Activated CD4-positive, alpha-beta memory T cell treated with anti-CD3 and anti-CD28 coated beads for 36 hours (primary cell): ENCODE measurements at regions of chr1 and their contacts with region 1.

Region 1: GRCh38 chr1:43389326-43390313 is at the starts of genes MED8 and SZT2:
- DNase-seq: peak; percentile 96
- H3K4me3 Mint-ChIP-seq: peak within 1 kb of the TSS; percentile 100
- H3K27ac Mint-ChIP-seq: peak within 1 kb of the TSS; percentile 97
- H3K4me1 Mint-ChIP-seq: peaks cover 40% of the 10 kb centered on the region
- H3K27me3 Mint-ChIP-seq: no peaks in the 10 kb centered on the region
- total RNA-seq, gene MED8: 38.9 to 39.4 TPM
- total RNA-seq, gene SZT2: 27.3 to 37.6 TPM

Region 2: DNA sequence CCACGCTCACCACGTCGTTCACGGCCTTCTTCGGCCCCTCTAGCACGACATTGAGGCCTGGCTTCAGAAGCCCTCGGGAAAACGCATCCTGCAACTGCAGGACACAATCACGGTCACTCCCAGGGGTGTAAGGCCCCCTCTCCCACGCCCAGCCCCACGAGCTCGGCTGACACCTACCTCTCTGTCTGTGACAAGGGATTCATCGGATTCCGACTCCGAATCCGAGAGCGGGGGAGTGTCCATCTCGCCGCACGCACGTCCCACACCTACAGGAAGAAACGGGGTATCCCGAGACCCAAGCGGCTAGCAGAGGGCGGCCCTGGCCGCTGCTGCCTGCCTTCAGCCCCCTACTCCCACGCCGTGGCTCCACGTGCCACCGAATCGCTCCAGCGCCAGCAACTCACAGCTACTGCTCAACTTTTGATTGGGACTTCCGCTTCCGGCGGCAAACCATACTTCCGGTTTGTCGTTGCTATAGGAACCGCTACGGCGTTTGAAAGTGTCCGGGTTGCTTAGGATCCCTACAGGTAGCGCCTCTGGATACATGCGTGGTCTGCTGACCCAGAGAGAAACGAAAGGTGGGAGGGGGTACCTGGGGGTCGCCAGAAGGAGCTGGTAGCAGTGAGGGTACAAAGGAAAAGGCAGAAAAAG is 217.6 kb before region 1 on chr1 and contains the starts of genes CFAP57 and EBNA1BP2:
- CTCF ChIA-PET with region 1: no interaction called
- POLR2A ChIA-PET with region 1: no interaction called
- intact Hi-C with region 1: loop called (anchors 1 kb)
- DNase-seq: peak; percentile 96
- H3K4me3 Mint-ChIP-seq: peak within 1 kb of the TSS; percentile 98
- H3K27ac Mint-ChIP-seq: peak within 1 kb of the TSS; percentile 76
- H3K4me1 Mint-ChIP-seq: peaks cover 27% of the 10 kb centered on the region
- H3K27me3 Mint-ChIP-seq: peaks cover 16% of the 10 kb centered on the region
- total RNA-seq, gene CFAP57: 0.43 TPM in 1 of 2 experiments, not detected in the other
- total RNA-seq, gene EBNA1BP2: 97.5 to 104 TPM

Region 3: DNA sequence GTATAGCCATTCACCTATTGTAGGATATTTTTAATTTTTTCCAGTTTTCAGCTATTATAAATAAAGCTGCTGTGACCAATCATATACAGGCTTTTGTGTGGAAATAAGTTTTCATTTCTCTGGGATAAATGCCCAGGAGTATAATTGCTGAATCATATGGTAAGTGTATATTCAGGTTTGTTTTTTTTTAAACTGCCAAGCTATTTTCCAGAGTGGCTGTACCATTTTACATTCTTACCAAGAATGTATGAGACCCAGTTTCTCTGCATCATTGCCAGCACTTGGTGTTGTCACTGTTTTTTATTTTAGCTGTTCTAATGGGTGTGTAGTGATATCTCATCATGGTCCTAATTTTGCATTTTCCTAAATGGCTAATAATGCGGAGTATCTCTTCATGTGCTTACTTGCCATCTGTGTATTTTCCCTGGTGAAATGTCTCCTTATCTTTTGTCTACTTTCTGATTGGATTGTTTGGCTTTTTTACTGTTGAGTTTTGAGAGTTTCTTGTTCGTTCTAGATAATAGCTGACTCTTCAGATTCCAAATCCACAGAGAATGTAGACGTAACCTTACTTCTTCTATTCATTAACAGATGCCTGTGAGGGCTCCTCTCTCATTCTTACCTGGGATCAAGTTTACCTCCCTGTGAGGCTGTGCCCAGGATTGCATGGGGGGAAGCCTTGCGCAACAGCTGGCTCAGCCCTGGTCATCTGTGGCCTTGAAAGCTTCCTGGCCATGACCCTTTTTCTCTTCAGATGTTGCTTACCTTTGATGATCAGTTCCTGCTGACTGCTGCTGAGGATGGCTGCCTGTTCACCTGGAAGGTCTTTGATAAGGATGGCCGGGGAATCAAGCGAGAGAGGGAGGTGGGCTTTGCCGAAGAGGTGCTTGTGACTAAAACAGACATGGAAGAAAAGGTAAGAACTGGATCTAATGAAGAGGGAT is 174.8 kb before region 1 on chr1:
- CTCF ChIA-PET with region 1: no interaction called
- POLR2A ChIA-PET with region 1: no interaction called
- intact Hi-C with region 1: no loop called
- DNase-seq: no peak
- H3K4me3 Mint-ChIP-seq: no peak overlapping the region
- H3K27ac Mint-ChIP-seq: no peak overlapping the region
- H3K4me1 Mint-ChIP-seq: no peaks in the 10 kb centered on the region
- H3K27me3 Mint-ChIP-seq: peaks cover 10% of the 10 kb centered on the region

Region 4: GRCh38 chr1:43227143-43227764 is 162.4 kb before region 1 on chr1:
- CTCF ChIA-PET with region 1: interaction called, 10 read pairs
- POLR2A ChIA-PET with region 1: no interaction called
- intact Hi-C with region 1: no loop called
- DNase-seq: peak; percentile 88
- H3K4me3 Mint-ChIP-seq: no peak overlapping the region
- H3K27ac Mint-ChIP-seq: no peak overlapping the region
- H3K4me1 Mint-ChIP-seq: no peaks in the 10 kb centered on the region
- H3K27me3 Mint-ChIP-seq: peaks cover 1% of the 10 kb centered on the region

Region 5: GRCh38 chr1:43358746-43359693 is 30.6 kb before region 1 on chr1 and contains the start of gene CDC20:
- CTCF ChIA-PET with region 1: interaction called, 7 read pairs
- POLR2A ChIA-PET with region 1: interaction called, 5 read pairs
- intact Hi-C with region 1: loop called (anchors 1 kb)
- DNase-seq: peak; percentile 100
- H3K4me3 Mint-ChIP-seq: peak within 1 kb of the TSS; percentile 84
- H3K27ac Mint-ChIP-seq: peak within 1 kb of the TSS; percentile 74
- H3K4me1 Mint-ChIP-seq: peaks cover 28% of the 10 kb centered on the region
- H3K27me3 Mint-ChIP-seq: no peaks in the 10 kb centered on the region
- total RNA-seq, gene CDC20: 152 to 155 TPM

Region 6: DNA sequence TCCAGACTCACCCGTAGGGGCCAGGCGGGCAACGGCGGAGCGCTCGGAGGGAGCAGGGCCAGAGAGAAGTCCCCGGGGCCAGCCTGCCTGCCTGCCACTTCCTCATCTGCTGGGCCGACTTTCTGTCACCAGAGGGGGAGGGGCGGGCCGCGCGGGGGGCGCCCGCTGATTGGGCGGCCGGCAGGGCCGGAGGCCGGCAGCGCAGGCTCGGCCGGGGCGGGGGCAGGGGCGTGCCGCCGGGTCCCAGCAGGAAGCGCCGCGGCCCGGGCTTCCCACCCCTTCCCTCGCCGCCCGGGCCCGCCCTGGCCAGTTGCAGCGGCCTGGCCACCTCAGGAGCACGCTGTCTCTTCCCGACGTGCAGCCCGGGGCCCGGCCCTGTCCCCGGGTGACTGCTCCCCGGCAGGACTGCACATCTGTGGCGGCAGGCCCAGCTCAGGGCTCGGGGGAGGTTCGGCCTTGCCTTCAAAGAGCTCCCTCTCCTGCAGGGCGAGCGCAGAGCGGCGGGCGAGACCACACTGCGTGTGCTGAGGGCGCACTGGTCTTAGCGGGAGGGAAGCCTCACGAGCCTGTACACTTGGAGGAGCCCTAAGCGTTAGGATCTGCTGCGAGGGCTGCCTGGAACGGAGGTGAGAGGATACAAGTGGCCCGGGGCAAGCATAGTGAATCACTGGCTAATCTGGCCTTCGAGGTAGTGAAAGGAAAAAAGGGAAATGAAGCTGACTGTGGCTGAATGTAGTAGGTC is 21.5 kb before region 1 on chr1 and contains the start of gene ELOVL1:
- CTCF ChIA-PET with region 1: interaction called, 14 read pairs
- POLR2A ChIA-PET with region 1: interaction called, 28 read pairs
- intact Hi-C with region 1: loop called (anchors 2 kb)
- DNase-seq: peak; percentile 94
- H3K4me3 Mint-ChIP-seq: peak within 1 kb of the TSS; percentile 93
- H3K27ac Mint-ChIP-seq: peak within 1 kb of the TSS; percentile 91
- H3K4me1 Mint-ChIP-seq: peaks cover 29% of the 10 kb centered on the region
- H3K27me3 Mint-ChIP-seq: no peaks in the 10 kb centered on the region
- total RNA-seq, gene ELOVL1: 63.4 to 64.7 TPM

Region 7: GRCh38 chr1:43454266-43455011 is 64.8 kb after region 1 on chr1:
- CTCF ChIA-PET with region 1: no interaction called
- POLR2A ChIA-PET with region 1: interaction called, 6 read pairs
- intact Hi-C with region 1: loop called (anchors 2 kb)
- DNase-seq: peak; percentile 85
- H3K4me3 Mint-ChIP-seq: peak overlapping the region; percentile 80
- H3K27ac Mint-ChIP-seq: peak overlapping the region; percentile 85
- H3K4me1 Mint-ChIP-seq: peaks cover 19% of the 10 kb centered on the region
- H3K27me3 Mint-ChIP-seq: peaks cover 18% of the 10 kb centered on the region